Common myeloid progenitor, CD34-positive (primary cell): ENCODE measurements at regions of chr10 and their contacts with region 1.

Region 1: DNA sequence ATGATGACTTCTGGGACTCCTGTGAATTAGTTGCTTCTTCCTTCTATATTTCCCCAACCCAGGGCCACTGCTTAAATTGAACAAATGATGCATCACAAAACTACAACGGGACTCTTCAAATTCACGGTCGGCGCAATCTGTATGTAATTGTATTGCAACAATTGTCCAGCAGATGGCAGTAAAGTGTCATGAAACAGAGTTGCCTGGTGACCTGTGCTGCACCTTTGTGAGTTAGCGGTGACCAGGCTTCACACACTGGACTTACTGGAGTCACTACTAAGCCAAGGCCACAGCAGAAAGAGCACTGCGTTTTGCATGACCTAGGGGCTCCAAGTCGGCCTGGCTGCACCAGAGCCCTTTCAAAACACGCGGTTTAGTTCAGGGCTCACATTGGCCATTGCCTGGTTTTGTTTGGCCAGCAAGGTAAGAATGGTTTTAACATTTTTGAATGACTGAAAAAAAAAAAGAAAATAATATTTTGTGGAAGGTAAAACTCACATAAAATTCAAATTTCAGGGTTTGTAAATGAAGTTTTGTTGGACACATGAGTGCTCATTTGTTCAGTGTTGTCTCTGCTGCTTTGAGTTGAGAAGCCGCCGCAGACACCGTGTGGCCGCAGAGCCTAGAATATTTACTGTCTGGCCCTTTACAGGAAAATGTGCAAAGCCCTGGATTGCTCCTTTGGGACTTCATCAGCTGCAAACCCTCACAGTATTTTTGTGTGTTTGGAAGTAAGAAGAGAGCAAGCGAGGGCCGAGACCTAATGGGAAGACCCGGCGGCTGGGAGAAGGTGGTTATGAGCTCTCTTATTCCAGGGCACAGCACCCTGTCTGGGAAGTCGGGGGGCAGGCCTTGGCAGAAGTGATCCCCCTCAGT is 23.2 kb upstream of the ZNF32 start:
- DNase-seq: peak; percentile 57 to 71 (median 64)
- H3K4me3 ChIP-seq: no peak overlapping the region
- H3K27ac ChIP-seq: no peak overlapping the region
- H3K4me1 ChIP-seq: peaks cover 0 to 7% (median 5%) of the 10 kb centered on the region in 4 experiments
- H3K27me3 ChIP-seq: peaks cover 0 to 28% (median 5%) of the 10 kb centered on the region in 5 experiments

Region 2: DNA sequence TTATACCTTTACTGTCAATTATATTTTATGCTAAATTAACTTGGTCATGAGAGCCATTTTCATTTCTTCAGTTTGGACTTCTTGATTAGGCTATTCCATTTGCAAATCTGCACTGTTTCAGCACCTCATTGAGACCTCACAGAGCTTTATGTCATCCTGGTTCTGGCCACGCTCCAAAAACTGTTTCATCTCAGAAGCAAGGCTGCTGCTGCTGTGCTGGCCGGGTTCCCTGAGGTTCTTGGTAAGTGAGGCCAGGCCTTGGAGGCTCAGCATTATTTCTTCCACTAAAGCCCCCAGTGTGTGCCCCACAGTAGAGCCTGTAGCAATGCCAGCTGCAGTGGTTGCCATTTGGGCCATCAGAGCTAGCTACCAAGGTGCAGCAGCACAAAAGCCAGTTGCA is 73.4 kb before region 1 on chr10:
- CTCF ChIA-PET with region 1: no interaction called
- POLR2A ChIA-PET with region 1: no interaction called
- DNase-seq: no peak
- H3K4me3 ChIP-seq: no peak overlapping the region
- H3K27ac ChIP-seq: no peak overlapping the region
- H3K4me1 ChIP-seq: peaks cover 8 to 33% (median 27%) of the 10 kb centered on the region in 4 experiments
- H3K27me3 ChIP-seq: no peaks in the 10 kb centered on the region

Region 3: DNA sequence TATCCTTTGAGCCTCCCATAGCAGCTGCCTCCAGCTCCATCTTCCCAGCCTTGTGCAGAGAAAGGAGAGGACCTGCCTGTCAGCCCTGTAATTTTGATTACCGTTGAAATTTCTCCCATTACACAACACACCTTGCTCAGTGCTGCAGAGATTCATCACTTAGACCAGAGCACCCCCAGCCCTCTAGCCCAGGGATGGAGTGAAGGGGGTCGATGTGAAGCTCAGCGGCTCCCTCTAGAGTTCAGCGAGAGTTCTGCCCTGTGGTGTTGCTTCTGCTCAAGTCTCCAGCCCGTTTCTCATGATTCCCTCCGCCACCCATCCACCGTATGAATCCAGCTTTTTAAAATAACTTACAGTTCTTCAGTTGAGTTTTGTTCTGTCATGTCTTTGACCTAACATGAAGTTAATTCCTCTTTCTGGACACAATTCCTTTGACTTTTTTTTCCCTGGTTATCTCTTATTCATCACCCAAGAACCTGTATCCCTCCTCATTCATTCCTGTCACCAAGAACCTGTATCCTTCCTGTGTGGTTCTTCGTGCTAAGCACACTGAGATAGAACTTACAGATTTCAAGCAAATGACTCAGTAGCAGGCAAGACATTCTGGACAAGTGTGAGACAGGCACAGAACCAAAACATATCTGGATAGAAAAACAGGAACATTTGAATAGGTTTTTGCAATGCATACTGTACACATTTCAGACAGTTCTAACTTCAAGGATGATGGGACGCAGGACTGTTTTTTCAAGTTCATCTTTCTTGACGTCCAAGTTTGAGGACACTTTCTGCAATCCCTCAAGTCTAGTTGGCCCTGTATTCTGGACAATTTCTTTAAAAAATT is 11.8 kb after region 1 on chr10:
- CTCF ChIA-PET with region 1: interaction called, 34 read pairs
- POLR2A ChIA-PET with region 1: no interaction called
- DNase-seq: peak; percentile 55 to 71 (median 70)
- H3K4me3 ChIP-seq: no peak overlapping the region
- H3K27ac ChIP-seq: no peak overlapping the region
- H3K4me1 ChIP-seq: peaks cover 0 to 3% (median 1%) of the 10 kb centered on the region in 4 experiments
- H3K27me3 ChIP-seq: peaks cover 0 to 7% (median 0%) of the 10 kb centered on the region in 5 experiments

Region 4: DNA sequence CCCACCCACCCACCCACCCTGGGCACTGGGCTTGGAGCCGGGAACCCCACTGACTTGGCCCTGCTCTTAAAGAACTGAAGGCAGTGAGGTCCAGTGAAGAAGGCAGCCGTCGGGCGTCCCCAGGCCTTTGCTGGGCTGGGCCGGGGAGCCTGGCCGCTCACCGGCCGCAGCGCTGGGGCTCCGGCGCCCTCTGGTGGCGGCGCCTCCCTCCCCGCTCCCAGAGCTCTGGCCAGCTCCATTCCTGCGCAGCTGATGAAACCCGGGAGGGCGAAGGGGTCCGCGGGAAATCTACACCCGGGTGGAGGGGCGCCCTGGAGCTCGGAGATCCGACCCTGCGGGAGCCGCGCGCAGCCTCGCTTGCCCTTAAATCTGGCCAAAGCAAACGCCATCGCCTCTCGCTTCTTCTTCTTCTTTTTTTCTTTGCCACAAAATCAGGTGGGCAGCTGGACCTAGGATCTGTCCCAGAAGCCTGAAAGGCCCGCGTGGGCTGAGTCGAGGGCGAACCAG is 714.7 kb after region 1 on chr10:
- CTCF ChIA-PET with region 1: interaction called, 11 read pairs
- POLR2A ChIA-PET with region 1: no interaction called
- DNase-seq: peak; percentile 33 to 37 (median 36)
- H3K4me3 ChIP-seq: no peak overlapping the region
- H3K27ac ChIP-seq: no peak overlapping the region
- H3K4me1 ChIP-seq: peaks cover 0 to 24% (median 16%) of the 10 kb centered on the region in 4 experiments
- H3K27me3 ChIP-seq: peaks cover 0 to 64% (median 26%) of the 10 kb centered on the region in 5 experiments